ENCODE measurements at regions of chr12 and their contacts with region 1.

Region 1: GRCh38 chr12:62917926-62918325 is 17.0 kb downstream of the PPM1H start:
- DNase-seq: no peak
- ATAC-seq: no peak
- H3K4me3 Mint-ChIP-seq: no peak overlapping the region
- H3K27ac Mint-ChIP-seq: no peak overlapping the region
- H3K4me1 Mint-ChIP-seq: peaks cover 79% of the 10 kb centered on the region
- H3K27me3 Mint-ChIP-seq: no peaks in the 10 kb centered on the region
- CTCF ChIP-seq: no peak

Region 2: GRCh38 chr12:62848421-62848820 is 69.5 kb before region 1 on chr12:
- CTCF ChIA-PET with region 1: no interaction called
- POLR2A ChIA-PET with region 1: no interaction called
- DNase-seq: no peak
- ATAC-seq: no peak
- H3K4me3 Mint-ChIP-seq: no peak overlapping the region
- H3K27ac Mint-ChIP-seq: no peak overlapping the region
- H3K4me1 Mint-ChIP-seq: peaks cover 46% of the 10 kb centered on the region
- H3K27me3 Mint-ChIP-seq: no peaks in the 10 kb centered on the region; the same call in 1 of the 2 replicates
- CTCF ChIP-seq: no peak

Region 3: GRCh38 chr12:62900686-62901272 is 17.1 kb before region 1 on chr12:
- CTCF ChIA-PET with region 1: no interaction called
- POLR2A ChIA-PET with region 1: no interaction called
- DNase-seq: no peak
- ATAC-seq: no peak; the same call in 1 of the 2 replicates
- H3K4me3 Mint-ChIP-seq: no peak overlapping the region
- H3K27ac Mint-ChIP-seq: no peak overlapping the region
- H3K4me1 Mint-ChIP-seq: peaks cover 33% of the 10 kb centered on the region
- H3K27me3 Mint-ChIP-seq: no peaks in the 10 kb centered on the region
- CTCF ChIP-seq: no peak

Region 4: DNA sequence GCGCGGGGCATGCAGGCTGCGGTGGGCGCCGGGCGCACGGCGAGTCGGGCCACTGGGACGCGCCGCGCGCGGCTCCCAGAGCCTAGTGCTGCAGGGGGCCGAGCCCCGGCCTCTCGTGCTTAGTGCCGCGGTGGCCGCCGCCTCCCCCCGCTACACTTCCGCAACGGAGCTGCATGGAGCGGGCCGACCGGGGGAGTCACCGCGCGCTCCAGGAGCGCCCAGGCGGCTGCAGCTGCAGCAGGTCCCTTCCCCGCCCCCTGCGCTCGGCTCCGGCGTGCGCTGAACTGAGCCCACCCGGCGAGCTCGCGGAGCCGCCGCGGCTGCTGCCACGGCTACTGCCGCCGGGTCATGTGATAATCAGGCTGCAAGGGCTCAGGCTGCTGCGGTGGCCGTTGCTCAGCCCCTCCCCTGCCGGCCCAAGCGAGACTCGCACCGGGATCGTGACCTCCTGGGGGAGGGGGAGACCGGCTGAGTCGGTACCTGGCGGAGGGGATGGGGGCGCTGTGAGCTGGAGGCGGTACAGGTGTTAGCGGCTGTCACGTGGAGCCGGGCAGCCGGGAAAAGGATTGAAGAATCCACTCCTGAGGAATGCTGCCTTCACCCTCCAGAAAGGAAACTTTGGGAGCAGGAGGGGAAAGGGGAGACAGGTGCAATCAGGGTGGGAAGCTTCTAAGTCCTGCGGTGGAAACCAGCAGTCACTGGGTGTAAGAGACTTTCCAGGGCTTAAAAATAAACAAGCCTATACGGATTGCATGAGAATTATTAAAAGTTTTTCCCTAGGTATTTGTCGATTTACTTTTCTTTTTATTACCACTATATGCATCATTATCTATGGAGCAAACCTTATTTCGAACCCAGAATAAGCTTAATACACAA is 17.1 kb after region 1 on chr12 and contains the start of gene PPM1H:
- CTCF ChIA-PET with region 1: interaction called, 11 read pairs
- POLR2A ChIA-PET with region 1: interaction called, 3 read pairs
- DNase-seq: peak; percentile 97
- ATAC-seq: peak; percentile 91
- H3K4me3 Mint-ChIP-seq: peak within 1 kb of the TSS; percentile 100
- H3K27ac Mint-ChIP-seq: peak within 1 kb of the TSS; percentile 96
- H3K4me1 Mint-ChIP-seq: peaks cover 44% of the 10 kb centered on the region
- H3K27me3 Mint-ChIP-seq: no peaks in the 10 kb centered on the region
- CTCF ChIP-seq: peak; percentile 53; the same call in 1 of the 2 replicates
- total RNA-seq, gene PPM1H: 37.1 to 45.6 TPM (median 40.9 TPM) in 3 replicates

Measured in WTC11 (cell line).